AG04449 (cell line): ENCODE measurements at regions of chr6 and their contacts with region 1.

Region 1: DNA sequence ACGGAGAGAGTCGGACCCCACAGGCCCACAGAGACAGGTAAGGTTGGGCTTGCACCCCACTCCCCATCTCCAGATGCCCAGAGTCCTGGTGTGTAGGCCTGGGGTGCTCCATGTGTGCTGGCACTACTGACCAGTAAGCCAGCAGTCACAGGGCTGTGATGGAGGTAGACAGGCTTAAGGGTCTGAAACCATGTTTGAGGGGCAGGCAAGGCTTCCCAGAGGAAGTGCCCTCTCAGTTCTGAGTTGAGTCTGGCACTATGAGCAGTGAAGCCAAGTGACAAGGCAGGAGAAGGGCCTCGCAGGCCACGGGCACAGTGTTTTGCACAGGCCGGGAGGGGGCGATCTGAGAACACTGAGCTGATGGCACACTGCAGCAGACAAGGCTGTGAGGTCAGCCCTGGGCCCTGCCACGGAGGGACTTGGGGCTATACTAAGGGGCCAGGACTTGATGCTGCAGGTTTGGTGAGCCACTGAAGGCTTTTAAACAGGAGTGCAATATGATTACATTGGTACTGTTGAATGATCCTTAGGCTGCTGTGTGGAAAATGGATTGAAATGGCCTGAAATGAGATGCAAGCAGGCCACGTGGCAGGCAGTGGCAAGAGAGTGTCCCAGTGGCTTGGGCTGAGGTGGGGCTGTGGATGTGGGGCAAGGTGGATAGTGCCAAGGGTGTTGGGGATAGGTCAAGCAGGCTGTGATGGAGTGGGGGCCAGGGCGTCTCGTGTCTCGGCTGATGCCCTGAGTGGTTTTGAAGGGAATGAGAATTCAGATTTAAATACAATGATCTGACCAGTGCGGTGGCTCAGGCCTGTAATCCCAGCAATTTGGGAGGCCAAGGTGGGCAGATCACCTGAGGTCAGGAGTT is 20.3 kb downstream of the TTBK1 start:
- DNase-seq: no peak
- H3K4me3 ChIP-seq: no peak overlapping the region
- CTCF ChIP-seq: peak; percentile 96

Region 2: DNA sequence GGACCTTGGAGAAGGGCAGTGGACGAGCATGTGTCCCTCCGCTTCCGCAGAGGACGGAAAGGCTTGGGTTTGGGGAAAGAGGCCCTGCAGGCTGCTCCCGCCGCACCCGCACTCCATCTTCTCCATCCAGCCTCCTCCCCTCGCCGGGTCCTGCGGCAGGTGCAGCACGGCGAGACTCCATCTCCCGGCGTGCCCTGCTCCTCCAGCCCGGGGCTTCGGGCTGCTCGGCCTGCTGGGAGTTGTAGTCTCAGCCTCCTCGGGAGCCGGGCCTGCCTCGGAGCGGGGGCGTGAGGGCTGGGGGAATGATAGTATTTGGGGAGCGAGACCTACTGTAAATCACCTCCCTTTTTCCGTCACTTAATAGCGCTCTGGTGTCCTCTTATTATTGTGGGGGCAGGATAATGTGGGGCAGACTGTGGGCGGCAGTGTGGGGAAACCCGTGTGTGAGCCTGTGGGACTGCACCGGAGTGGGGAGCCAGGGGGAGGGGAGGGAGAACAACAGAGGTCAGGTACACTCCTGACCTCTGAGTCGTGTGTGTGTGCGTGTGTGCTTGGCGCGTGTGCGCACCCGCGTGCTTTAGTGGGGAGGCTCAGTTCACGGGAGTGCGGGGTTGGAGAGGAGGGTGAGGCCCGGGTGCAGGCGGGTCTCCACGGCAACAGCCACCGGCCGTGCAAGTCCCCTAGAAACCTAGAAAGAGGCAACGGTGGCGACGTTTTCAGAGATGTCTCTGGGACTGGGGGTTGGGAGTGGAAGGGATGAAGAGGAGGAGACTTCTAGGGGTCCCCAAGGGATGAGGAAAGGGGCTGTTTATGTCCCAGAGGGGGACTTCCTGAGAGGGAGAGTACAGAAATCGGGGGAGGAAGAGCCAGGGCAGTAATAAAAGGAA is 16.2 kb before region 1 on chr6:
- CTCF ChIA-PET with region 1: interaction called, 32 read pairs
- POLR2A ChIA-PET with region 1: no interaction called
- DNase-seq: no peak
- H3K4me3 ChIP-seq: peak overlapping the region; percentile 44
- CTCF ChIP-seq: no peak